CD4-positive, alpha-beta memory T cell (primary cell): ENCODE measurements at regions of chr7 and their contacts with region 1.

Region 1: GRCh38 chr7:26078437-26079336 is 73.3 kb upstream of the NFE2L3 start:
- DNase-seq: peak; percentile 73 to 82 (median 75)
- H3K4me3 ChIP-seq: no peak overlapping the region
- H3K4me3 Mint-ChIP-seq: peak overlapping the region in 5 of 8 donors; percentile 21 to 65 (median 46)
- H3K27ac ChIP-seq: no peak overlapping the region
- H3K27ac Mint-ChIP-seq: no peak overlapping the region
- H3K4me1 ChIP-seq: peaks cover 8% of the 10 kb centered on the region
- H3K4me1 Mint-ChIP-seq: peaks cover 0 to 10% (median under 1%) of the 10 kb centered on the region in 4 donors
- H3K27me3 ChIP-seq: peaks cover 15% of the 10 kb centered on the region
- H3K27me3 Mint-ChIP-seq: peaks cover 20 to 46% of the 10 kb centered on the region in 2 donors

Region 2: DNA sequence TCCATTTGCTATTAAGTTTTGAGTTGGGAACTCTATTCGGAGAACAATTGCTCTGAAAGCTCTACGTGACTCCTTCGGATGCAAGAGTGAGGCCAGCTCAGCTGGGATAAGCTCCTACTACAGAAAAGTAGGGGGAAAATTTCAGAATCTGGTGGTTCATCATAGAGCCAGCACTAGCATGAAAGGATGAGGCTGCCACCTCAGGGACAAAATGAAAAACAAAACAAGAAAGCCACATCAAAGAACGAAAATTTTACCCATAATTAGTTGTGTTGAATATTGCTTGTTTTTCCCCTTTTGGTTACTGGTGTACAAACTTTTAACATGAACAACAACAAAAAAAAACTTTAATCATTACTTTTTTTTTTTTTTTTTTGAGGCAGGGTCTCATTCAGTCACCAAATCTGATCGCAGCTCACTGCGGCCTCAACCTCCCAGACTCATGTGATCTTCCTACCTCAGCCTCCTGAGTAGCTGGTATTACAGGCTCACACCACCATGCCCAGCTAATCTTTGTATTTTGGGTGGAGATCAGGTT is 33.6 kb after region 1 on chr7:
- CTCF ChIA-PET with region 1: interaction called, 10 read pairs
- POLR2A ChIA-PET with region 1: no interaction called
- intact Hi-C with region 1: loop called (anchors 5 kb)
- DNase-seq: peak in 4 of 5 donors; percentile 22 to 38 (median 31)
- H3K4me3 ChIP-seq: no peak overlapping the region
- H3K4me3 Mint-ChIP-seq: peak overlapping the region in 2 of 8 donors; percentile 17 to 39
- H3K27ac ChIP-seq: no peak overlapping the region
- H3K27ac Mint-ChIP-seq: peak overlapping the region in 6 of 7 donors; percentile 20 to 61 (median 30)
- H3K4me1 ChIP-seq: peaks cover 16% of the 10 kb centered on the region
- H3K4me1 Mint-ChIP-seq: peaks cover 6 to 14% (median 9%) of the 10 kb centered on the region in 4 donors
- H3K27me3 ChIP-seq: no peaks in the 10 kb centered on the region
- H3K27me3 Mint-ChIP-seq: no peaks in the 10 kb centered on the region

Region 3: GRCh38 chr7:26180792-26181198 is 102.1 kb after region 1 on chr7:
- CTCF ChIA-PET with region 1: no interaction called
- POLR2A ChIA-PET with region 1: no interaction called
- intact Hi-C with region 1: no loop called
- DNase-seq: no peak
- H3K4me3 ChIP-seq: no peak overlapping the region
- H3K4me3 Mint-ChIP-seq: no peak overlapping the region
- H3K27ac ChIP-seq: no peak overlapping the region
- H3K27ac Mint-ChIP-seq: peak overlapping the region in 4 of 7 donors; percentile 1 to 81 (median 20)
- H3K4me1 ChIP-seq: peaks cover 34% of the 10 kb centered on the region
- H3K4me1 Mint-ChIP-seq: peaks cover 31 to 68% (median 44%) of the 10 kb centered on the region in 4 donors
- H3K27me3 ChIP-seq: no peaks in the 10 kb centered on the region
- H3K27me3 Mint-ChIP-seq: no peaks in the 10 kb centered on the region

Region 4: GRCh38 chr7:26284995-26285632 is 206.4 kb after region 1 on chr7:
- CTCF ChIA-PET with region 1: interaction called, 14 read pairs
- POLR2A ChIA-PET with region 1: no interaction called
- intact Hi-C with region 1: loop called (anchors 2 kb)
- DNase-seq: peak in 2 of 5 donors; percentile 14 to 24
- H3K4me3 ChIP-seq: no peak overlapping the region
- H3K4me3 Mint-ChIP-seq: no peak overlapping the region
- H3K27ac ChIP-seq: no peak overlapping the region
- H3K27ac Mint-ChIP-seq: no peak overlapping the region
- H3K4me1 ChIP-seq: no peaks in the 10 kb centered on the region
- H3K4me1 Mint-ChIP-seq: peaks cover 2 to 6% (median 4%) of the 10 kb centered on the region in 4 donors
- H3K27me3 ChIP-seq: no peaks in the 10 kb centered on the region
- H3K27me3 Mint-ChIP-seq: no peaks in the 10 kb centered on the region

Region 5: DNA sequence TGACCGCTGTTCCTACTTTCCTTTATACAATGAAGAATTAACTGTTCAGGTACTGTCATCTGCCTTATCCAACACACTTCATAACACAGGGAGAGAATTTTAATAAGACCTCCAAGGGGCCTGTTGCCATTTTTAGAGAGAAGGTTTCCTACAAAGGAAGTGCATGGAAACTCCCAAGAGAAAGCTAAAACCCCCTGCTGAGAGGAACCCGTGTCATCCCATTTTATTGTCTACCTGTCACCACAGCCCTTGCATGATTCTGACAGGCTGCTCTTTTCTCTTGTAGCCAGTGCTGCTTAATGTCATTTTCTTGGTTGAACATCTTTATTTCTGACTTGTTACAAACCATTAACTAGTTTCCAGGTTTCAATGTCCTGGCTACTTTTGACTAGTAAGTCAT is 311.3 kb after region 1 on chr7:
- CTCF ChIA-PET with region 1: no interaction called
- POLR2A ChIA-PET with region 1: no interaction called
- intact Hi-C with region 1: no loop called
- DNase-seq: no peak
- H3K4me3 ChIP-seq: no peak overlapping the region
- H3K4me3 Mint-ChIP-seq: no peak overlapping the region
- H3K27ac ChIP-seq: no peak overlapping the region
- H3K27ac Mint-ChIP-seq: no peak overlapping the region
- H3K4me1 ChIP-seq: no peaks in the 10 kb centered on the region
- H3K4me1 Mint-ChIP-seq: no peaks in the 10 kb centered on the region
- H3K27me3 ChIP-seq: peaks cover 6% of the 10 kb centered on the region
- H3K27me3 Mint-ChIP-seq: peaks cover 22 to 29% of the 10 kb centered on the region in 2 donors